Activated CD4-positive, alpha-beta memory T cell treated with anti-CD3 and anti-CD28 coated beads for 36 hours (primary cell): ENCODE measurements at regions of chr22 and their contacts with region 1.

Region 1: GRCh38 chr22:22884010-22884887 is 3.4 kb upstream of the IGLL5 start:
- DNase-seq: peak; percentile 73
- H3K4me3 Mint-ChIP-seq: no peak overlapping the region
- H3K27ac Mint-ChIP-seq: no peak overlapping the region
- H3K4me1 Mint-ChIP-seq: peaks cover 2% of the 10 kb centered on the region
- H3K27me3 Mint-ChIP-seq: peaks cover 14% of the 10 kb centered on the region

Region 2: DNA sequence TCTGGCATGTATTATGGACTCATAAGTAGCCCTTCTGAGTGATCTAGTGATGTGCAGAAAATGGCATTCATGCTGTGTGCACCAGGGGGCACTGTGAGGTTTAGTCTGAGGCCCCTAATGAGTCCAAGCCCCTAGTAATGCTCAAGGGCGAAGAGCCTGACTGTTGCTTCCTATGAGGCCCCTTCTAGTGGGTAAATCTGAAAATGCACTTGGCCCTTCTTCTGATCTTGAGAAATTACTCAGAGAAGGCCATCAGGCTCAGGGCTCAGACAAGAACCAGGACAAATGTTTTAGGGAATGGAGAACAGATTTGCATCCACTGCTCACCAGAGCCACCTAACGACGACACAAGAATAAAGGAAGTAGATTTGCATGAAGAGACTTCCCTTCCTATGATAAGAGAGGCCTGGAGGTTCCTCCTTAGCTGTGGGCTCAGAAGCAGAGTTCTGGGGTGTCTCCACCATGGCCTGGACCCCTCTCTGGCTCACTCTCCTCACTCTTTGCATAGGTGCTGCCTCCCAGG is 164.0 kb before region 1 on chr22:
- CTCF ChIA-PET with region 1: no interaction called
- POLR2A ChIA-PET with region 1: no interaction called
- intact Hi-C with region 1: no loop called
- DNase-seq: peak; percentile 61
- H3K4me3 Mint-ChIP-seq: no peak overlapping the region
- H3K27ac Mint-ChIP-seq: no peak overlapping the region
- H3K4me1 Mint-ChIP-seq: peaks cover 32% of the 10 kb centered on the region
- H3K27me3 Mint-ChIP-seq: peaks cover 3% of the 10 kb centered on the region

Region 3: DNA sequence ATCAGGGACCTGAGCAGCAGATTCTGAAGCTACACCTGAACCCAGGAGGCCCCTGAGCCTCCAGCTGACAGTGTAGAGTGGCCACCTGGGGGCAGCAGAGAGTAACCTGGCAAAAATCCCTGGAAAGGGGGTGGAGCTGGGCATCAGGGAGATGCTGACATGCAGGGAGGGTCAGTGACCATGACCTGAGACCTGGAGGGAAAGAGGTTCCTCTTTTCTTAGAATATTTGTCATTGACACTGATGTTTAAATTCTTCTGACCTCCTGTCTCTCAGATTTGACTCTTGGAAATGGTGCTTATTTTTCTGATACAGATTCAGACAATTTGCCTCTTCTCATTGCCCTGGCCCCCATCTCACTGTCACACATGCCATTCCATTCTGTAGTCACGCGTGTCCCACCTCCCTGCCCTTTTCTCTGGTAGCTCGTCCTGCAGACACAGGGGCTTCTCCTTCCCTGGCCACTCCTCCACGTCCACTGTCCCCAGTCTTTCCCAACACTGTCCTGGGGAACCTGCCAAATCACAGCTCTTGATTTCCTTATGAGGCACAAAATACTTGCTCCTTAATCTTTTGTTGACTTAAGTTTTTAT is 113.9 kb before region 1 on chr22:
- CTCF ChIA-PET with region 1: interaction called, 23 read pairs
- POLR2A ChIA-PET with region 1: no interaction called
- intact Hi-C with region 1: no loop called
- DNase-seq: peak; percentile 65
- H3K4me3 Mint-ChIP-seq: no peak overlapping the region
- H3K27ac Mint-ChIP-seq: no peak overlapping the region
- H3K4me1 Mint-ChIP-seq: peaks cover 9% of the 10 kb centered on the region
- H3K27me3 Mint-ChIP-seq: peaks cover 5% of the 10 kb centered on the region

Region 4: GRCh38 chr22:22802339-22802970 is 81.8 kb before region 1 on chr22:
- CTCF ChIA-PET with region 1: interaction called, 264 read pairs
- POLR2A ChIA-PET with region 1: no interaction called
- intact Hi-C with region 1: no loop called
- DNase-seq: peak; percentile 45
- H3K4me3 Mint-ChIP-seq: no peak overlapping the region
- H3K27ac Mint-ChIP-seq: no peak overlapping the region
- H3K4me1 Mint-ChIP-seq: peaks cover 9% of the 10 kb centered on the region
- H3K27me3 Mint-ChIP-seq: no peaks in the 10 kb centered on the region

Region 5: DNA sequence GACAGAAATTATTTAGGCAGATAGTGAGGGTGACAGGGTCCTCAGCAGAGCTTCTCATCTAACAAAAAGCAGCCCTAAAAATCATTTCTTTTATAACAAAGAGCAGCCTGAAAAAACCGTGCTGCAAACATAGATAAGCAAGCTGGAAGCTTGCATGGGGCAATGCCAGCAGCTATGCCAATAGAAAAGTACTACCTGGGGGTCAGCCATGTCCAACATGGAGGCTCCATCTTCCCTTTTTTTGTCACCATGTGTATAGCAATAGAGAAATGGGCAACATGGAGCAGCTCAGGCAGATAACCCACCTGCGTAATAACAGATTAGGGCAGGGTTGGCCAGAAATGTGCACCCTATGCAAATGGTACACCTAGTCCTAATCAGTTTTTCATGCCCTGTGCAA is 54.1 kb before region 1 on chr22:
- CTCF ChIA-PET with region 1: interaction called, 16 read pairs
- POLR2A ChIA-PET with region 1: no interaction called
- intact Hi-C with region 1: no loop called
- DNase-seq: no peak
- H3K4me3 Mint-ChIP-seq: no peak overlapping the region
- H3K27ac Mint-ChIP-seq: no peak overlapping the region
- H3K4me1 Mint-ChIP-seq: peaks cover 9% of the 10 kb centered on the region
- H3K27me3 Mint-ChIP-seq: no peaks in the 10 kb centered on the region

Region 6: GRCh38 chr22:22942511-22943329 is 58.5 kb after region 1 on chr22:
- CTCF ChIA-PET with region 1: interaction called, 19 read pairs
- POLR2A ChIA-PET with region 1: no interaction called
- intact Hi-C with region 1: loop called (anchors 5 kb)
- DNase-seq: peak; percentile 83
- H3K4me3 Mint-ChIP-seq: no peak overlapping the region
- H3K27ac Mint-ChIP-seq: no peak overlapping the region
- H3K4me1 Mint-ChIP-seq: peaks cover 5% of the 10 kb centered on the region
- H3K27me3 Mint-ChIP-seq: peaks cover 4% of the 10 kb centered on the region

Region 7: GRCh38 chr22:23054531-23055257 is 170.4 kb after region 1 on chr22:
- CTCF ChIA-PET with region 1: no interaction called
- POLR2A ChIA-PET with region 1: no interaction called
- intact Hi-C with region 1: no loop called
- DNase-seq: peak; percentile 9
- H3K4me3 Mint-ChIP-seq: no peak overlapping the region
- H3K27ac Mint-ChIP-seq: no peak overlapping the region
- H3K4me1 Mint-ChIP-seq: no peaks in the 10 kb centered on the region
- H3K27me3 Mint-ChIP-seq: peaks cover 5% of the 10 kb centered on the region